Panc1 (cell line): ENCODE measurements at regions of chr7 and their contacts with region 1.

Region 1: GRCh38 chr7:107150375-107151073 is 18.3 kb upstream of the HBP1 start:
- DNase-seq: no peak
- ATAC-seq: no peak
- H3K4me3 ChIP-seq: no peak overlapping the region
- H3K27ac ChIP-seq: no peak overlapping the region
- H3K4me1 ChIP-seq: no peaks in the 10 kb centered on the region
- H3K27me3 ChIP-seq: no peaks in the 10 kb centered on the region; the same call in 1 of the 2 replicates
- CTCF ChIP-seq: peak; percentile 70; the same call in 1 of the 2 replicates

Region 2: DNA sequence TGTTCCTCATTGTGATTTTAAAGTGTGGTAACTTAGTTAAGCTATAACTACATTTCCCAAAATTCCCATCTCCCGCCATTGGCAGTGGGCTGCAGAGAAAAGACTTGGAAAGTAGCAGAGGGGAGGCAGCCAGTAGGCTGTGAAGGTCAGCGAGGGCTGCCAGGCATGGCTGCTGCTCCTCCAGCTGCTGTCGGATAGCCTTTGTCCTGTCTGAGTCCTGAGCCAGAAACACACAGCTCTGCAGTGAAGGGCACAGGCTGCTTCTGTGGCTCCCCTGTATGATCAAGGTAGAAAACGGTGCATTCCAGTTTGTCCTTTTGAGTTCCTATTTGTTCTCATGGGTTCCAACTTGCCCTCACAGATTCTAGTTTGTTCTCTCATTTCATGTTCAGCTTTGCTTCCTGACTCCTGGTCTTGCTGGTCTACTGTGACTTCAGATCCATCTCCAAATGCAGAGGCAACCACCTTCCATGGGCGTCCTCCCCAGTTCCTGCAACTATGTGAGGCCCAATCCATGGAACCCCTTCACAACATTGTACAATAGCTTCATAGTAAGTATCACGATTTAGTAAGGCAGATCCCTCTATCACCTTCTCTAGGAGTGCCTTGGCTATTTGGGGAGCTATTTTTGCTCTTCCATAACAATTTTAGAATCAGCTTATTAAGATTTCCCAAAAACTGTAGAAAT is 1070.1 kb before region 1 on chr7:
- CTCF ChIA-PET with region 1: no interaction called
- POLR2A ChIA-PET with region 1: interaction called, 10 read pairs
- in situ Hi-C with region 1: no loop called
- intact Hi-C with region 1: no loop called
- DNase-seq: no peak
- ATAC-seq: no peak
- H3K4me3 ChIP-seq: no peak overlapping the region
- H3K27ac ChIP-seq: no peak overlapping the region
- H3K4me1 ChIP-seq: no peaks in the 10 kb centered on the region; the same call in none of the 2 replicates
- H3K27me3 ChIP-seq: no peaks in the 10 kb centered on the region
- CTCF ChIP-seq: no peak

Region 3: GRCh38 chr7:106767498-106768323 is 382.8 kb before region 1 on chr7:
- CTCF ChIA-PET with region 1: no interaction called
- POLR2A ChIA-PET with region 1: no interaction called
- in situ Hi-C with region 1: no loop called
- intact Hi-C with region 1: no loop called
- DNase-seq: no peak
- ATAC-seq: no peak
- H3K4me3 ChIP-seq: peak overlapping the region in 1 of 2 experiments; percentile 0; a peak in 1 of 4 replicates
- H3K27ac ChIP-seq: no peak overlapping the region
- H3K4me1 ChIP-seq: no peaks in the 10 kb centered on the region
- H3K27me3 ChIP-seq: no peaks in the 10 kb centered on the region
- CTCF ChIP-seq: no peak

Region 4: DNA sequence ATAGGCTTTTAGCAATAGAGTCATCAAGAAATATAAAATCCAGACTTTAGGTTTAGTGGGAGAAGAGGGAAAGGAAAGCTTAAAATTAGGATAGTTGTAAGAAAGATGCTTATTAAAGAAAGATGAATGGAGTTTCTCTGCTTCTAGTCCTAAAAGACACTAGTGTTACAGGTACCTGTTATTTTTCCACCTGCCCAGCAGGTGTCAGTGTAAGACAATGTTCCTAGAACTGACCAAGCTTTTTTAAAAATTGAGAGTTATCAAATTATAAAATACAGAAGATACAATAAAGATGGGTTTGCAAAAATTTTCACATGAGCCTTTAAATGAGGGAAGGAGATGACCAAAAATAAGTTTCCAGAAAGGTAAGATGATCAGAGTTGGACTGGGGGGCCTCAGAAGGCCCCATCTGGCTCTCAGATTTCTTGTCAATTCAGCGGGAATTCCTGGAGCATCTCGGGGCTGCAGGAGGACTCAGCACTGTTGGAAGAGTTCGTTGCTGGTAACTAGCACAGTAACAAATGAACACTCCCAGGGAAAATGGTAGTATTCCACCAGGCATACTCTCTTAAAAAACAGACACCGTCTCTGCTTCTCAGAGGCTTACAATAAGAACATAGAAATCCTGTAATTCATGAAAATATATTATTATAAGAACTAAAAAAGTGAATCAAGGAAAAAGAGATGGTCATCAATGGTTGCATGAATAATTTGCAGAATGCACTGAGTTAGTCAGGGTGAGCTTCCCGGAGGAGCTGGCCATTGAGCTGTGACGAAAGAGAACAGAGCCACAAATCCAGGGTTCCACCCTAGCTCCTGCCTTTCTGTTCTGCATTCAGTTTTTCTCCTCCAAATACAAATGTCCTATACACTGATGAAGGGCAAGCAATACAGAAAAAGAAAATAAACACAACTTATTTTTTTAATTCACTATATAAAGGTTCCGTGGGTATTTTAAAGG is 357.2 kb before region 1 on chr7:
- CTCF ChIA-PET with region 1: no interaction called
- POLR2A ChIA-PET with region 1: no interaction called
- in situ Hi-C with region 1: no loop called
- intact Hi-C with region 1: loop called (anchors 1 kb)
- DNase-seq: no peak
- ATAC-seq: peak; percentile 60; the same call in 1 of the 2 replicates
- H3K4me3 ChIP-seq: no peak overlapping the region
- H3K27ac ChIP-seq: no peak overlapping the region
- H3K4me1 ChIP-seq: no peaks in the 10 kb centered on the region
- H3K27me3 ChIP-seq: no peaks in the 10 kb centered on the region
- CTCF ChIP-seq: peak; percentile 73

Region 5: GRCh38 chr7:106947244-106947728 is 203.2 kb before region 1 on chr7:
- CTCF ChIA-PET with region 1: interaction called, 6 read pairs
- POLR2A ChIA-PET with region 1: no interaction called
- in situ Hi-C with region 1: no loop called
- intact Hi-C with region 1: loop called (anchors 2 kb)
- DNase-seq: peak; percentile 22
- ATAC-seq: peak; percentile 84
- H3K4me3 ChIP-seq: no peak overlapping the region
- H3K27ac ChIP-seq: no peak overlapping the region
- H3K4me1 ChIP-seq: no peaks in the 10 kb centered on the region
- H3K27me3 ChIP-seq: peaks cover 4% of the 10 kb centered on the region
- CTCF ChIP-seq: peak; percentile 49; the same call in 1 of the 2 replicates

Region 6: DNA sequence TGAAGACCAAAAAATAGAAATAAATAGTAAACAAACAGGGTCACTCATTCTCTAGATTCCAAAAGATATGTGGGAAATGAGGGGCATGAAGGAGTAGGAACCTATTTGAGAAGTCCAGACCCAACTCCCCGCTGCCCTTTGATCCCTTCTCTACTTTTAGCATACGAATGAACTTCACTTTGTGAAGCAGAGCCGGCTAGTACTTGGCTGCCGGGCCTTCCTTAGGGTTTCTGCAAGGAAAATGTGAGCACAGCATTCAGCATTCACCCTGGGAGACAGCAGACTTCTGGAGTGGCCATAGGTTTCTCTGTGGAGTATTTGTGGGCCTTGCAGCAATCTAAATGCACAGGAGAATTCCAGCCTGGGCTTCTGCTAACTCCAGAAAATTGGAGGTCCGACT is 182.4 kb before region 1 on chr7:
- CTCF ChIA-PET with region 1: no interaction called
- POLR2A ChIA-PET with region 1: no interaction called
- in situ Hi-C with region 1: no loop called
- intact Hi-C with region 1: no loop called
- DNase-seq: no peak
- ATAC-seq: no peak
- H3K4me3 ChIP-seq: no peak overlapping the region
- H3K27ac ChIP-seq: no peak overlapping the region
- H3K4me1 ChIP-seq: no peaks in the 10 kb centered on the region
- H3K27me3 ChIP-seq: peaks cover 3% of the 10 kb centered on the region
- CTCF ChIP-seq: no peak

Region 7: GRCh38 chr7:107338080-107338479 is 187.6 kb after region 1 on chr7:
- CTCF ChIA-PET with region 1: no interaction called
- POLR2A ChIA-PET with region 1: no interaction called
- in situ Hi-C with region 1: no loop called
- intact Hi-C with region 1: no loop called
- DNase-seq: no peak
- ATAC-seq: no peak
- H3K4me3 ChIP-seq: no peak overlapping the region
- H3K27ac ChIP-seq: no peak overlapping the region
- H3K4me1 ChIP-seq: no peaks in the 10 kb centered on the region
- H3K27me3 ChIP-seq: no peaks in the 10 kb centered on the region
- CTCF ChIP-seq: no peak

Region 8: GRCh38 chr7:107810626-107811025 is 660.1 kb after region 1 on chr7:
- CTCF ChIA-PET with region 1: no interaction called
- POLR2A ChIA-PET with region 1: no interaction called
- in situ Hi-C with region 1: no loop called
- intact Hi-C with region 1: no loop called
- DNase-seq: no peak
- ATAC-seq: no peak
- H3K4me3 ChIP-seq: no peak overlapping the region
- H3K27ac ChIP-seq: no peak overlapping the region
- H3K4me1 ChIP-seq: no peaks in the 10 kb centered on the region
- H3K27me3 ChIP-seq: no peaks in the 10 kb centered on the region
- CTCF ChIP-seq: no peak